ENCODE measurements at regions of chr1 and their contacts with region 1.

Region 1: DNA sequence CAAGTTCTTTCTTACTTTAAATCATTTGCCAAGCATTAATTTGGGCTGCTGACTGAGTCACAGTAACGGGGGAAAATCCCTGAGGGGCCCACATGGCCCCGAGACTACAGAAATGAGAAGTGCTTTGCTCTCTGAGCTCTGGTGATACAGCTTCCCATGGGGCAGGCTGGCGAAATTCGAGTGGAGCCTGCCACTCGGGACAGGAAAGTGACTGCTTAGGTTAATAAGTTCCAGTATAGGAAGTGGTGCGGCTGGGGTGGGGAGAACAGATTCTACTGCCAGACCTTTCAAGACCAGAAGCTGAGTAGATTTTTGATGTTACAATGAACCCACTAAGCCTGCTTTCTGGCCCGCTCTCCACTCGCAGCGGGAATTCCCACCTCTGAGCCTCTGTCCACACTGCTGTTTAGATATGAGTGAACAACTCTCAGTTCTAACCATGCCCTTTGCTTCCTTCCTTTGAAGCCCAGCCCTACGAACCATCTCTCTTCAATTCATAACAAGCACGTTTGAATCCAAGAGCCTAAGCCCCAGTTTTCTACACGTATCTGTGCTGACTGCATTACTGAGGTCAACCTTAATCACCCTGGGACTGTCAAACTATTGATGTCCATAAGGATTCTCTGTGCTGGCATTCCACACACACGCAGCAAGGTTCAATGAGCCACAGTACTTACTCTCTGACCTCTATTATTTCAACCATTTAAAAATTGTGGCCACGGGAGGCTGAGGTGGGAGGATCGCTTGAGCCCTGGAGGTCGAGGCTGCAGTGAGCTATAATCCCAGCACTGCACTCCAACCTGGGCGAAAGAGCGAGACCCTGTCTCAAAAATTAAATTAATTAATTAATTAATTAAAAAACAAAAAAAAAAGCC is 9.6 kb downstream of the ZBTB17 start:
- DNase-seq: peak; percentile 96
- ATAC-seq: peak; percentile 75
- H3K4me3 Mint-ChIP-seq: peak overlapping the region; percentile 72
- H3K27ac Mint-ChIP-seq: peak overlapping the region; percentile 99
- H3K4me1 Mint-ChIP-seq: peaks cover 86% of the 10 kb centered on the region
- H3K27me3 Mint-ChIP-seq: no peaks in the 10 kb centered on the region
- CTCF ChIP-seq: no peak

Region 2: GRCh38 chr1:15799004-15799936 is 167.0 kb before region 1 on chr1:
- CTCF ChIA-PET with region 1: no interaction called
- POLR2A ChIA-PET with region 1: no interaction called
- intact Hi-C with region 1: no loop called
- DNase-seq: peak; percentile 59
- ATAC-seq: peak; percentile 83
- H3K4me3 Mint-ChIP-seq: no peak overlapping the region
- H3K27ac Mint-ChIP-seq: no peak overlapping the region
- H3K4me1 Mint-ChIP-seq: peaks cover 9% of the 10 kb centered on the region
- H3K27me3 Mint-ChIP-seq: peaks cover 1% of the 10 kb centered on the region
- CTCF ChIP-seq: no peak

Region 3: DNA sequence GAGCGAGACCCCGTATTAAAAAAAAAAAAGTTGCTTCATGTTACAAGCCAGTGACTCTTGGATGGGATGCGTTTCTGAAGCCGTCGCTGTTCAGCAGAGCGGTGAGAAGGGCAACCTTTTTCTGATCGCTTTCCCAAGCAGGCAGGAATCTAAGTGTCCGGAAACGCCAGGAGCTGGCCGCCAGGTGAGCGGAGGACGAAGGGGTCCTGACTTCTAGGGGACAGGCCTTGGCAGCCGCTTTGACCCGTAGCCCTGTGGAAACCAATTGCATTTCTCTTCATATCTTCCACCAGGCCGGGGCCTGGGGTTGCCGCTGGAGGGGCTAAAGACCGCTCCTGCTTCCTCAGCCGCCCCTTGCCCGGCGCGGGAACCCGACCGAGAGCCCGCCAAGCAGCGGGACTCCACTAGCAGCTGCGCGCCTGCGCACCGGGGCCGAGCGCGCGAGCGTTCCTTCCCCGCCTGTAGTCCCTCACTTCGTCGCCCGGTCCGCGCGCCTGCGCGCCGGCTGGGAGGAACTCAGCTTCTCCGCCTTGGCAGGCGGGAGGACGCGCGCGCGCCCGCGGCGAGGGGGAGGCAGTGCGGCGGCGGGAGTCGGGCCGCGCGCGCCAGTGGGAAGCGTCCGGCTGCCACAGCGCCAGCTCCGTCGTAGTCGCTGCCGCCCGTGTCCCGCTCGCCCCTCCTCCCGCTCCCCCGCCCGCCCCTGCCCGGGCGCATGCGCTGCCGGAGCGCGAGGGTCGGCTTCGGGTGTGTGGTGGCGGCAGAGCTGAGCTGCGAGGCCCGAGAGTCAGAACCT is 119.0 kb before region 1 on chr1 and contains the start of gene SPEN:
- CTCF ChIA-PET with region 1: interaction called, 4 read pairs
- POLR2A ChIA-PET with region 1: interaction called, 4 read pairs
- intact Hi-C with region 1: loop called (anchors 5 kb)
- DNase-seq: peak; percentile 97
- ATAC-seq: peak; percentile 86
- H3K4me3 Mint-ChIP-seq: peak within 1 kb of the TSS; percentile 98
- H3K27ac Mint-ChIP-seq: peak within 1 kb of the TSS; percentile 97
- H3K4me1 Mint-ChIP-seq: peaks cover 38% of the 10 kb centered on the region
- H3K27me3 Mint-ChIP-seq: no peaks in the 10 kb centered on the region
- CTCF ChIP-seq: no peak
- total RNA-seq, gene SPEN: 59.8 to 60.3 TPM

Region 4: DNA sequence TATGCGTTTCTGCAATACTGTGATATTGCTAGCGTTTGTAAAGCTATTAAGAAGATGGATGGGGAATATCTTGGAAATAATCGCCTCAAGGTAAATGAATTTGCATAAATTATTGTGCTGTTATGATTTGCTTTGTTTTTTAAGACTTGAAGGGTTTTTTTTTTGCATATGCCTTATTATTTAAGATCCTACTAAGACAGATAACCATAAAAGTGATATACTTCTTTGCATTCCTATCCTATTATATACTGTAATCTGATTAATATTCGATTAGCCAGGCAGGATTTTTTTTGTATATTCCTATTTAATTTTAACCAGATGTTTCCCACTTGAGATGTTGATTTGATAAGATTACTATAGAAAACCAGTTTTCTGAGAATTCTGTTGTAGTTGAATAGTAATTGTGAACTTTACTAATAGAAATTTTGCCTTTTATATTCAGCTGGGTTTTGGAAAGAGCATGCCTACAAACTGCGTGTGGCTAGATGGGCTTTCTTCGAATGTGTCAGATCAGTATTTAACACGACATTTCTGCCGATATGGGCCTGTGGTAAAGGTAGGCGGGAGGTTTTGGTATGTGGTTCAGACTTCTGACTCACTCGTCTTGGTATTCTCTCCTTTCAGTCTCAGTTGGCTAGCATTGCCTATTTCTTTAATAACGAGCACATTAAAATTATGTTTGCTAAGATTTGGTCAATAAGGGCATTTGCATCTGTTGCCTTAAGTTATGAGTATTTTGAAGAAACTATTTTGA is 47.2 kb before region 1 on chr1:
- CTCF ChIA-PET with region 1: no interaction called
- POLR2A ChIA-PET with region 1: interaction called, 5 read pairs
- intact Hi-C with region 1: loop called (anchors 5 kb)
- DNase-seq: peak; percentile 94
- ATAC-seq: peak; percentile 88
- H3K4me3 Mint-ChIP-seq: peak overlapping the region; percentile 36
- H3K27ac Mint-ChIP-seq: peak overlapping the region; percentile 69
- H3K4me1 Mint-ChIP-seq: peaks cover 58% of the 10 kb centered on the region
- H3K27me3 Mint-ChIP-seq: no peaks in the 10 kb centered on the region
- CTCF ChIP-seq: no peak